ENCODE measurements at regions of chr1 and their contacts with region 1.

Region 1: DNA sequence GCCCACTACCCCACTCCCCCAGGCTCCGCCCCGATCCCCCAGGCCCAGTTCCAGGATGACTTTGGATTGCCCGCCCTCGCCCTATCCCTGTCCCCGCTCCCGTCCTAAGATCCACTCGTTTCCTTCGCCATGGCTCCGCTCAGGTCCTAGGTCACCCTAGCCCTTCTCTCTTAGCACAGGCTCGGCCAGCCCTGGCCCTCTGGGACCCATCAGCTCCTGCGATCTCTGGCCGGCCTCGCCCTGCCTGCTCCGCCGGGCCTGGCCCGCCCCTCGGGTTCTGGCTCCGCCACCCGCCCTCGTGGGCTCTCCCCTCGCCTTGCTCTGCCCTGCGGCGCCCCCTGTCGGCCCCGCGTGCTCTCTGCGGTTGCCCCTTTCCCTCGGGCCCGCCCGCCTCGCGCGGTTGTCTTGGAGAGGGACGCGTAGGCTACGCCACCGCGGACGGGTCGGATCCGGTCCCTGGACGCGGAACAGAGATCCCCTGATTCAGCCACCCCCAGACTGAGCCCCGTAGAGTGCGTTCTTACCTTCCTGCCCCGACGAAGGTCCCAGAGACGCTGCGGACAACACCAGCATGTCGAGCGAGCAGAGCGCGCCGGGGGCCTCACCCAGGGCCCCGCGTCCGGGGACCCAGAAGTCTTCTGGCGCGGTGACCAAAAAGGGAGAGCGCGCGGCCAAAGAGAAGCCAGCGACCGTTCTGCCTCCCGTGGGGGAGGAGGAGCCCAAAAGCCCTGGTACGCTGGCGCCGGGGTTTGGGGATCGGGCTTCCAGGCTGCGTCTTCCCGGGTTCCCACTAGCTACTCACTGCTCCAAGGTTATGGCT is at the start of gene LRRC71:
- DNase-seq: peak in 1 of 2 experiments; percentile 98
- H3K4me3 ChIP-seq: peak within 1 kb of the TSS; percentile 27 to 60 (median 39); a peak in 7 of 8 replicates
- H3K27ac ChIP-seq: no peak within 1 kb of the TSS
- H3K4me1 ChIP-seq: peaks cover 3 to 17% (median 8%) of the 10 kb centered on the region in 4 experiments; a peak in 6 of 7 replicates
- H3K27me3 ChIP-seq: peaks cover 53 to 73% (median 61%) of the 10 kb centered on the region in 4 experiments
- CTCF ChIP-seq: peak; percentile 90 to 96 (median 93)
- EP300 ChIP-seq: peak in 1 of 2 experiments; percentile 27; a peak in 1 of 3 replicates
- POLR2A ChIP-seq: no peak
- RAD21 ChIP-seq: peak; percentile 89 to 95
- total RNA-seq, gene LRRC71: not detected in 2 replicates

Region 2: GRCh38 chr1:156786655-156787054 is 133.8 kb before region 1 on chr1:
- CTCF ChIA-PET with region 1: no interaction called
- POLR2A ChIA-PET with region 1: no interaction called
- DNase-seq: no peak
- H3K4me3 ChIP-seq: no peak overlapping the region
- H3K27ac ChIP-seq: no peak overlapping the region
- H3K4me1 ChIP-seq: no peaks in the 10 kb centered on the region
- H3K27me3 ChIP-seq: no peaks in the 10 kb centered on the region
- CTCF ChIP-seq: no peak
- EP300 ChIP-seq: no peak
- POLR2A ChIP-seq: no peak
- RAD21 ChIP-seq: no peak

Region 3: GRCh38 chr1:156816561-156817328 is 103.7 kb before region 1 on chr1 and contains the start of gene SH2D2A:
- CTCF ChIA-PET with region 1: no interaction called
- POLR2A ChIA-PET with region 1: no interaction called
- DNase-seq: no peak
- H3K4me3 ChIP-seq: no peak within 1 kb of the TSS
- H3K27ac ChIP-seq: no peak within 1 kb of the TSS
- H3K4me1 ChIP-seq: peaks cover 0 to 11% (median 5%) of the 10 kb centered on the region in 4 experiments; a peak in 6 of 7 replicates
- H3K27me3 ChIP-seq: peaks cover 1 to 45% (median 41%) of the 10 kb centered on the region in 4 experiments
- CTCF ChIP-seq: no peak
- EP300 ChIP-seq: no peak
- POLR2A ChIP-seq: no peak
- RAD21 ChIP-seq: no peak
- total RNA-seq, gene SH2D2A: 3.3 and 4.5 TPM in 2 replicates

Region 4: DNA sequence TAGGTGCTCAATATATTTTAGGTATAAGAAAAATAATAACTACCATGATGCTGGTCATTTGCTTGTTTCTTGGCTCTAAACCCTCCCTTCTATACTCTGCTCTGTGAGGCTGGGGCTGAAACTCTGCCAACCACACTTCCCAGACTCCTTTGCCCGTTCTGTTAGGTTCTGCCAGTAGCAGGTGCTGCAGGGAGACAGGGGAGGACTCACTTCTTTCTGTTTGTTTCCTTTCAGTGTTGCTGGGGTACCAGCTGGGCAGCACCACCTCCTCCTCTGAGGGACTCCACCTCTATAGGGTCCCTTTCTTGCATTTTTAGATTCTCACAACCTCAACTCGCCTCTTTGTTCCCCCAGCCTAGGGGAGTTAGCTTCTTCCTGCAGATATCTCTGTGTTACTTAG is 86.8 kb before region 1 on chr1:
- CTCF ChIA-PET with region 1: interaction called, 78 read pairs
- POLR2A ChIA-PET with region 1: no interaction called
- DNase-seq: no peak
- H3K4me3 ChIP-seq: no peak overlapping the region
- H3K27ac ChIP-seq: no peak overlapping the region
- H3K4me1 ChIP-seq: no peaks in the 10 kb centered on the region
- H3K27me3 ChIP-seq: peaks cover 0 to 14% (median 7%) of the 10 kb centered on the region in 4 experiments; a peak in 5 of 7 replicates
- CTCF ChIP-seq: no peak
- EP300 ChIP-seq: no peak
- POLR2A ChIP-seq: no peak
- RAD21 ChIP-seq: no peak

Region 5: DNA sequence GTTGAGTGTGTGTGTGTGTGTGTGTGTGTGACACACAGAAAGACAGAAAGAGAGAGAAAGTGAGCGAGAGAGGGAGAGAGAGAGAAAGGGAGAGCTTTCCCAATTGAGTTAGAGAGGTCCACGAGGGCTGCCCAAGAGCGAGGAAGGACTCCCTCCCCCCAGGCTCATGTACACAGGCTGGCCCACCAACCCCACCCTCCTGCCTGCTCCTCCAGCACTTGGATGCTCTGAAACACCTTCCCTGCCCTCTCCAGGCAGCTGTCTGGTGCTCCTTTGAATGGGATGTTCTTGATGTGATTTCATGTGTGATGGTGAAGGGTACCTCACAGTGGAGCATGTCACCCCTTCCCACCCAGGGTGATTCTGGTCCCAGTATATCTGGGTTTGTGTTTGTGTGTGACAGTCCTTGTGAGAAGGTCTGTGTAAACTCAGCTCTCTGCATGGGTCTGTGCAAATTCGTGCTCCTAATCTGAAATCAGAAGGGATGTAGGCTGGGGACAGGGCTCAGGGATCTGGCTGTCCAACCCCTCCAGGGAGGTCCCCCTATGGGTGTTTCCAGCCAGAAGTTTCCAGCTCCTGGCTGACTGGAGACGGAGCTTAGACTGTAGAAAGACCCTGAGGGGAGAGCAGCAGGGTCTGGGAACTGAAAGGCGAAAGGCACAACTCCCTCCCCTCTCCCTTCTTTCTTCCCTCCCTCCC is 33.7 kb before region 1 on chr1:
- CTCF ChIA-PET with region 1: interaction called, 287 read pairs
- POLR2A ChIA-PET with region 1: interaction called, 10 read pairs
- DNase-seq: no peak
- H3K4me3 ChIP-seq: no peak overlapping the region; a peak in 1 of 8 replicates
- H3K27ac ChIP-seq: no peak overlapping the region
- H3K4me1 ChIP-seq: peaks cover 8 to 34% (median 16%) of the 10 kb centered on the region in 4 experiments
- H3K27me3 ChIP-seq: peaks cover 0 to 35% (median 31%) of the 10 kb centered on the region in 4 experiments; a peak in 6 of 7 replicates
- CTCF ChIP-seq: no peak
- EP300 ChIP-seq: no peak
- POLR2A ChIP-seq: no peak
- RAD21 ChIP-seq: no peak

Region 6: GRCh38 chr1:156898161-156898566 is 22.3 kb before region 1 on chr1:
- CTCF ChIA-PET with region 1: interaction called, 287 read pairs
- POLR2A ChIA-PET with region 1: interaction called, 4 read pairs
- DNase-seq: no peak
- H3K4me3 ChIP-seq: no peak overlapping the region
- H3K27ac ChIP-seq: no peak overlapping the region
- H3K4me1 ChIP-seq: peaks cover 0 to 9% (median 2%) of the 10 kb centered on the region in 4 experiments; a peak in 5 of 7 replicates
- H3K27me3 ChIP-seq: peaks cover 2 to 24% (median 21%) of the 10 kb centered on the region in 4 experiments
- CTCF ChIP-seq: no peak
- EP300 ChIP-seq: no peak
- POLR2A ChIP-seq: no peak
- RAD21 ChIP-seq: no peak